Posterior cingulate gyrus (tissue), 11 donors: ENCODE measurements at regions of chr6 and their contacts with region 1.

Region 1: DNA sequence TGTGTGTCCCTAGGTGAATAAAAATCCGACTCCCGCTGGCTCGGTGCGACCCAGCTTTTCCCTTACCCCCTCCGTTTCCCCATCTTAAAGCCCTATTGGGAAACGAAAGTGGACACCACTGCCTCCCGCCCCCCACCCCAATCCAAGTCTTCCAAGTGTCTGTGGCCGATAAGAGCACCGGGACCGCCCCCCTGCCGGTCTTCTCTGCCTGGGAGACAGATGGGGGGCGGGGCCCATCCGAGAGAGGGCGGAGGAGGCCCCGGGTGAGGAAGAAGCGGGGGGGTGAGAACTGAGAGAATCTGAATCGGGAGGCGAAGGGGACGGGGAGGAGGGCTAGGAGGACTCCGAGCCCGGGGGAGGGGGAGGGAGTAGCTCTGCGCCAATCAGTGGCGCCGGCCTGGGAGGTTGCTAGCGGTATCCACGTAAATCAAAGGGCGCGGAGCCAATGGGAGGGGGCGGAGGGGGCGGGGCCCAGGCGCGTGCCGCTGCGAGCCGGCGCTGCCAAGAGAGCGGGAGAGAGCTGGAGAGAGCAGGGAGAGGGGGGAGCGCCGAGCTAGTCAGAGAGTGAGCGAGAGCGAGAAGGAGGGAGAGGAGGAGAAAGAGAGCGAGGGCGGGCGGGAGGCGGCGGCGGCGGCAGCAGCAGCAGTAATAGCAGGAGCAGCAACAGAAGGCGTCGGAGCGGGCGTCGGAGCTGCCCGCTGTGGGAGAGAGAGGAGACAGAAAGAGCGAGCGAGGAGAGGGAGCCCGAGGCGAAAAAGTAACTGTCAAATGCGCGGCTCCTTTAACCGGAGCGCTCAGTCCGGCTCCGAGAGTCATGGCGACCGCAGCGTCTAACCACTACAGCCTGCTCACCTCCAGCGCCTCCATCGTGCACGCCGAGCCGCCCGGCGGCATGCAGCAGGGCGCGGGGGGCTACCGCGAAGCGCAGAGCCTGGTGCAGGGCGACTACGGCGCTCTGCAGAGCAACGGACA is at the start of gene POU3F2:
- DNase-seq: peak; percentile 89 to 99 (median 93)

Region 2: DNA sequence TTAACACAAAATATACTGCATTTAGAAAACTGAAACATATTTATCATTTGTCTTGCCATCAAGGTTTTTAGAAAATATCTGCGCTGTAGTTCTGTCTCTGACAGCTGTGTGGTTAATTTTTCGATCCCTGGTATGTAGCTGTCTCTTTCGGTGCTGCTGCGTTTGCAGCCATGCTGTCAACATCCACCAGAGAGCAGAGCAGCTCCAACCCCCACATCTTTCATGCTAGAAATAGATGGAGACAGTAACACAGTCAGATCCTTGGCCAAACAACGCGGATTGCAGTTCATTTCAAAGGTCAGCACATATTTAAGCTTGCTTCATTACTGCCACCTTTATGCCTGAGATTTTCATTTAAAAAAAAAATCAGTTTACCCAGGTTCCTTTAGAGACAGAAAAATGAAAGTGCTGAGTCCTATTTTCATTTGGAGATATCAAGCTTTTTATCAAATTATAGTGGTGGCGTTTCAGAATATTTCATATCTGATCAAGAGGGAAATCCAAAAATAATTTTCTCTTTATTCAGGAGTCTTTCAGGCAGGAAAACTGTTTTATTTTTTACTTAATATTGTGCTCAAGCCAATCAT is 1393.7 kb before region 1 on chr6:
- intact Hi-C with region 1: loop called (anchors 5 kb)
- DNase-seq: peak; percentile 47 to 96 (median 72)

Region 3: GRCh38 chr6:98574992-98575391 is 259.4 kb before region 1 on chr6:
- intact Hi-C with region 1: loop called (anchors 5 kb)
- DNase-seq: peak; percentile 35 to 95 (median 72)